HCT116 (cell line): ENCODE measurements at regions of chr11 and their contacts with region 1.

Region 1: DNA sequence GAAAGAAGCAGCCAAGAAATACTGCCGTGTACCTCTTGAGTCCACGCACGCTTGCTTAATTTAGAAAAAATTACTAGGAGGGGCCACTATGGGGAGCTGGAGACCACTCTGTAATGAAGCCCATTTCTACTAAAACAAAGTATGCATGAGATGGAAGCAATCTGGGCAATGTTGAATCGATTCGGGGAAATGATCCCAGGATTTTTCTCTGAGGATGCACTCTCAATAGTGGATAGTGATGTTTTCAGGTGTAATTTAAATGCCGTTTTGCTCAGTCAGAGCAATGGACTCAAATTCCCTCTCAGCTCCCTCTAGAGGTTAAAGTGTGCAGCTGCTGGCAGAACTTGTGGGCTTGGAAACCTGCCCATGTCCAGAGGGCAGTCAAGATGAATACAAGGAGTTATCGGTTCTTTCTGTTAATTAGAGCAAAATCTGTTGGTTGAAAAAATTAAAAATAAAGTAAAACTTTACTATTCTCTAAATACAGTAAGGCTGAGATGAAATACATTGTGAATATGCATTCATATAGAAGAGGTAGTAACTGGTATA is 64.1 kb downstream of the ME3 start:
- DNase-seq: peak; percentile 67
- ATAC-seq: peak; percentile 89
- H3K4me3 ChIP-seq: peak overlapping the region; percentile 4 to 18; a peak in 2 of 4 replicates
- H3K27ac ChIP-seq: no peak overlapping the region
- H3K4me1 ChIP-seq: peaks cover 0 to 7% of the 10 kb centered on the region in 2 experiments; a peak in 1 of 4 replicates
- H3K27me3 ChIP-seq: no peaks in the 10 kb centered on the region
- CTCF ChIP-seq: peak; percentile 93 to 100 (median 99)
- POLR2A ChIP-seq: no peak
- RAD21 ChIP-seq: peak; percentile 75

Region 2: GRCh38 chr11:85540635-85541205 is 1067.6 kb before region 1 on chr11:
- CTCF ChIA-PET with region 1: no interaction called
- POLR2A ChIA-PET with region 1: no interaction called
- RAD21 ChIA-PET with region 1: no interaction called
- intact Hi-C with region 1: no loop called
- DNase-seq: no peak
- ATAC-seq: peak; percentile 81
- H3K4me3 ChIP-seq: no peak overlapping the region
- H3K27ac ChIP-seq: no peak overlapping the region
- H3K4me1 ChIP-seq: no peaks in the 10 kb centered on the region
- H3K27me3 ChIP-seq: peaks cover 13% of the 10 kb centered on the region; the same call in 1 of the 2 replicates
- CTCF ChIP-seq: peak in 2 of 3 experiments; percentile 24 to 30; a peak in 3 of 6 replicates
- POLR2A ChIP-seq: no peak
- RAD21 ChIP-seq: no peak

Region 3: GRCh38 chr11:86068951-86069407 is 539.3 kb before region 1 on chr11 and contains the start of gene PICALM:
- CTCF ChIA-PET with region 1: no interaction called
- POLR2A ChIA-PET with region 1: no interaction called
- RAD21 ChIA-PET with region 1: no interaction called
- intact Hi-C with region 1: no loop called
- DNase-seq: peak; percentile 96
- ATAC-seq: peak; percentile 92
- H3K4me3 ChIP-seq: peak within 1 kb of the TSS; percentile 75 to 86
- H3K27ac ChIP-seq: peak within 1 kb of the TSS; percentile 71
- H3K4me1 ChIP-seq: peaks cover 24 to 35% of the 10 kb centered on the region in 2 experiments
- H3K27me3 ChIP-seq: no peaks in the 10 kb centered on the region
- CTCF ChIP-seq: no peak
- POLR2A ChIP-seq: no peak
- RAD21 ChIP-seq: no peak; the same call in 1 of the 2 replicates
- total RNA-seq, gene PICALM: 90.6 TPM

Region 4: GRCh38 chr11:86456052-86456939 is 152.0 kb before region 1 on chr11:
- CTCF ChIA-PET with region 1: interaction called, 27 read pairs
- POLR2A ChIA-PET with region 1: no interaction called
- RAD21 ChIA-PET with region 1: no interaction called
- intact Hi-C with region 1: loop called (anchors 1 kb)
- DNase-seq: peak; percentile 67
- ATAC-seq: peak; percentile 86
- H3K4me3 ChIP-seq: no peak overlapping the region
- H3K27ac ChIP-seq: no peak overlapping the region
- H3K4me1 ChIP-seq: peaks cover 14 to 15% of the 10 kb centered on the region in 2 experiments
- H3K27me3 ChIP-seq: no peaks in the 10 kb centered on the region
- CTCF ChIP-seq: peak; percentile 86 to 97 (median 96)
- POLR2A ChIP-seq: no peak
- RAD21 ChIP-seq: peak; percentile 98

Region 5: GRCh38 chr11:86594746-86595145 is 13.6 kb before region 1 on chr11:
- CTCF ChIA-PET with region 1: interaction called, 11 read pairs
- POLR2A ChIA-PET with region 1: no interaction called
- RAD21 ChIA-PET with region 1: no interaction called
- intact Hi-C with region 1: no loop called
- DNase-seq: no peak
- ATAC-seq: no peak
- H3K4me3 ChIP-seq: no peak overlapping the region
- H3K27ac ChIP-seq: no peak overlapping the region
- H3K4me1 ChIP-seq: peaks cover 12 to 47% of the 10 kb centered on the region in 2 experiments
- H3K27me3 ChIP-seq: no peaks in the 10 kb centered on the region
- CTCF ChIP-seq: no peak
- POLR2A ChIP-seq: no peak
- RAD21 ChIP-seq: no peak

Region 6: DNA sequence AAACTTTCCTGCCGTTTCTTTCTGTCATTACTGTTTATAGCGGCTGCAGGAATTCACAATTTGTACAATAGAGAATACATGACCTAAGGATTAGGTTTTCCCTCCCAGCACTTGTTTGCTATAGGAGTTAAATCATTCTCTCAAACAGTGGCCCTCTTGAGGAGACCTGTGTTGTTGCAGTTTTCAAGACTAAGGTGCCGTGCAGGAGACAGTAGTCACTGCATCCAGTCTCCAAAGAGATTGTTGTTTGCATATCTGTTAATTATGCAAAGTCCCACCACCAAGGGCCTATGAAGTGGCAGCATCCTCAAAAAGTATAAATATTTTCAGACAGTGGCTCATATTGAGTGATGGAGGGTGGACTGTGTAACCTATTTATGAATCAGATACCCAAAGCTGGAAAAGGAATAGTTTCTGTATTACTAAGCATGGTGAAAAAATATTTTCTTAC is 194.3 kb after region 1 on chr11:
- CTCF ChIA-PET with region 1: interaction called, 8 read pairs
- POLR2A ChIA-PET with region 1: no interaction called
- RAD21 ChIA-PET with region 1: interaction called in 1 of 2 experiments, 3 read pairs
- intact Hi-C with region 1: loop called (anchors 5 kb)
- DNase-seq: peak; percentile 53
- ATAC-seq: peak; percentile 66
- H3K4me3 ChIP-seq: no peak overlapping the region
- H3K27ac ChIP-seq: no peak overlapping the region
- H3K4me1 ChIP-seq: peaks cover 3 to 37% of the 10 kb centered on the region in 2 experiments
- H3K27me3 ChIP-seq: peaks cover 7% of the 10 kb centered on the region
- CTCF ChIP-seq: peak; percentile 52 to 66 (median 59); a peak in 5 of 6 replicates
- POLR2A ChIP-seq: no peak
- RAD21 ChIP-seq: peak; percentile 54

Region 7: GRCh38 chr11:86811637-86812321 is 203.5 kb after region 1 on chr11:
- CTCF ChIA-PET with region 1: interaction called, 14 read pairs
- POLR2A ChIA-PET with region 1: no interaction called
- RAD21 ChIA-PET with region 1: no interaction called
- intact Hi-C with region 1: no loop called
- DNase-seq: peak; percentile 76
- ATAC-seq: peak; percentile 88
- H3K4me3 ChIP-seq: peak overlapping the region in 1 of 2 experiments; percentile 17; a peak in 1 of 4 replicates
- H3K27ac ChIP-seq: peak overlapping the region; percentile 39; the same call in 1 of the 2 replicates
- H3K4me1 ChIP-seq: peaks cover 22 to 32% of the 10 kb centered on the region in 2 experiments
- H3K27me3 ChIP-seq: no peaks in the 10 kb centered on the region; the same call in 1 of the 2 replicates
- CTCF ChIP-seq: no peak
- POLR2A ChIP-seq: no peak
- RAD21 ChIP-seq: 0 out of 2 replicates have a peak, but pooled peaks have one; percentile 12

Region 8: GRCh38 chr11:86818466-86819192 is 210.3 kb after region 1 on chr11:
- CTCF ChIA-PET with region 1: no interaction called
- POLR2A ChIA-PET with region 1: no interaction called
- RAD21 ChIA-PET with region 1: no interaction called
- intact Hi-C with region 1: loop called (anchors 2 kb)
- DNase-seq: peak; percentile 52
- ATAC-seq: peak; percentile 65
- H3K4me3 ChIP-seq: no peak overlapping the region
- H3K27ac ChIP-seq: no peak overlapping the region
- H3K4me1 ChIP-seq: peaks cover 0 to 11% of the 10 kb centered on the region in 2 experiments; a peak in 2 of 4 replicates
- H3K27me3 ChIP-seq: no peaks in the 10 kb centered on the region; the same call in 1 of the 2 replicates
- CTCF ChIP-seq: peak; percentile 51 to 93 (median 83)
- POLR2A ChIP-seq: no peak
- RAD21 ChIP-seq: peak; percentile 97

Region 9: GRCh38 chr11:86919557-86920210 is 311.4 kb after region 1 on chr11:
- CTCF ChIA-PET with region 1: interaction called, 5 read pairs
- POLR2A ChIA-PET with region 1: no interaction called
- RAD21 ChIA-PET with region 1: no interaction called
- intact Hi-C with region 1: loop called (anchors 1 kb)
- DNase-seq: peak; percentile 54
- ATAC-seq: peak; percentile 84
- H3K4me3 ChIP-seq: no peak overlapping the region
- H3K27ac ChIP-seq: no peak overlapping the region
- H3K4me1 ChIP-seq: peaks cover 12 to 20% of the 10 kb centered on the region in 2 experiments
- H3K27me3 ChIP-seq: no peaks in the 10 kb centered on the region
- CTCF ChIP-seq: peak; percentile 67 to 77 (median 71)
- POLR2A ChIP-seq: no peak
- RAD21 ChIP-seq: peak; percentile 89